Cardiac septum (tissue), 1 donor: ENCODE measurements at regions of chr4 and their contacts with region 1.

Region 1: GRCh38 chr4:119858176-119858575 is 208.5 kb downstream of the MAD2L1 start:
- DNase-seq: no peak

Region 2: GRCh38 chr4:119707336-119707735 is 150.8 kb before region 1 on chr4:
- intact Hi-C with region 1: loop called (anchors 10 kb)
- DNase-seq: no peak